ENCODE measurements at regions of chr4 and their contacts with region 1.

Region 1: DNA sequence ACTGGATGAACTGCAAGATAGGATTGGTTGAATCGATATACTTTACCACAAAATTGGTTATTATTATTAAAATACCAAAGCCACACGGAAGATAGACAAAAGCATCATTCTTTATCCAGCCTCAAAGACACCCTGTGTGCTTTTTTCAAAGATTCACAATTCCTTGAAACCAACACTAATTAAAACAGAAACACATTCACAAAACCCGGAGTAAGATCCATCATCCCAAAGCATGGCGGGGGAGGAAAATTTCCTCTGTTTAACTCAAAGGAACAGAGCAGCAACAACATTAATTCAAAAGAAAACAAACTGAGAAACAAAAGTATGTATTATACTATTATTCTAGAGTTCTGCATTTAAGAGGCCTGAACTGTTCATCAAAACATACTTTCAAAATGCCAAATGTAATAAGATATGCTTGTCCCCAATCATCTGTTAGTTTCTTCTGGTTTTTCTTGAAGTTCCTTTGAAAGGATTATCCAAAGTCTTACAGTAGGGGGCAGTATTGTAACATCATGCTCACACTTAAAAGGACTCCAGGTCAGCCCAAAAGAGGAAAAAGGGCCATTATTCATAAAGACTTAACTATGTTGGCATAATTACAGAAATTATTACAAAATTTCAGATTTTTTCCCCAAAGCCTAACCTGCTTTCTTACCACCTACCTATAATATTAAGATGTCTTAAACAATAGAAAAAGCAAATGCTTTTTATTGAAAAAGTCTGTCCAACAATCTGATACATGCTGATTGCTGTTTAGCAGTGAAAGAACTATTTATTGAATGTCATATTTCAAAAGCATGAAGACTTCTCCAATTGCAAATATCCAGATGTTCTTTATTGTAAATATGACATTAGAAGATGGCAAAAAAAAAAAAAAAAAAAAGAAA is 168.7 kb downstream of the SCFD2 start:
- DNase-seq: peak; percentile 65
- ATAC-seq: peak; percentile 59; the same call in 2 of the 3 replicates
- H3K4me3 ChIP-seq: no peak overlapping the region
- H3K27ac ChIP-seq: no peak overlapping the region
- H3K4me1 ChIP-seq: 0 out of 2 replicates have a peak, but pooled peaks cover 2% of the 10 kb centered on the region
- H3K27me3 ChIP-seq: no peaks in the 10 kb centered on the region; a peak in 1 of 5 replicates
- CTCF ChIP-seq: peak; percentile 74
- EP300 ChIP-seq: no peak
- POLR2A ChIP-seq: no peak
- RAD21 ChIP-seq: peak; percentile 64

Region 2: GRCh38 chr4:53377319-53378170 is 180.4 kb after region 1 on chr4 and contains the start of gene FIP1L1:
- CTCF ChIA-PET with region 1: no interaction called
- POLR2A ChIA-PET with region 1: no interaction called
- in situ Hi-C with region 1: no loop called
- intact Hi-C with region 1: no loop called
- DNase-seq: peak; percentile 83
- ATAC-seq: peak; percentile 95
- H3K4me3 ChIP-seq: peak within 1 kb of the TSS; percentile 94 to 99 (median 98)
- H3K27ac ChIP-seq: peak within 1 kb of the TSS; percentile 84
- H3K4me1 ChIP-seq: peaks cover 49% of the 10 kb centered on the region
- H3K27me3 ChIP-seq: no peaks in the 10 kb centered on the region
- CTCF ChIP-seq: 0 out of 2 replicates have a peak, but pooled peaks have one; percentile 6
- EP300 ChIP-seq: no peak
- POLR2A ChIP-seq: peak; percentile 84 to 85
- RAD21 ChIP-seq: no peak; the same call in 1 of the 2 replicates
- total RNA-seq, gene FIP1L1: 58.8 and 69.4 TPM in 2 replicates

Region 3: GRCh38 chr4:53459548-53459947 is 262.4 kb after region 1 on chr4:
- CTCF ChIA-PET with region 1: no interaction called
- POLR2A ChIA-PET with region 1: no interaction called
- in situ Hi-C with region 1: no loop called
- intact Hi-C with region 1: loop called (anchors 2 kb)
- DNase-seq: peak; percentile 80
- ATAC-seq: peak; percentile 96
- H3K4me3 ChIP-seq: no peak overlapping the region
- H3K27ac ChIP-seq: no peak overlapping the region
- H3K4me1 ChIP-seq: peaks cover 23% of the 10 kb centered on the region
- H3K27me3 ChIP-seq: no peaks in the 10 kb centered on the region
- CTCF ChIP-seq: no peak
- EP300 ChIP-seq: 0 out of 4 replicates have a peak, but pooled peaks of 1 of the 2 experiments have one; percentile 62
- POLR2A ChIP-seq: no peak
- RAD21 ChIP-seq: no peak

Region 4: DNA sequence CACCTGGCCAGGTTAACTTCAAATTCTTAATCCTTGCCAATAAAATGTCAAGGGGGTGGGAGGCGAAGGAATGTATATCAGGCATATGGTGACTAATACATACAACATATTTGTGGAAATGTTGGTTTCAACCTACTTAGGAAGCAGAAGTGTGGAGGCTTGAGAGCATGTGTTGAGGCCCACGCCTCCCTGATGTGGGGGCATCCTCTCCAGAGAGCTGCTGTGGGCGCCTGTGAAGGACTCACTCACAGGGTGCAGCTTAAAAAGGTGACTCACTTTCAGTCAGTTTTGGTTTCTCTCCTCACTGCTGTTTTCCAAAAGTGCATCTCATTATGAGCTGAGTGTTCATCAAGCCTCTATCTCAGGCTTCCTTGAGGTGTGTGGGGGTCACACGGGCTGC is 366.7 kb after region 1 on chr4:
- CTCF ChIA-PET with region 1: no interaction called
- POLR2A ChIA-PET with region 1: no interaction called
- in situ Hi-C with region 1: no loop called
- intact Hi-C with region 1: no loop called
- DNase-seq: no peak
- ATAC-seq: no peak; the same call in 2 of the 3 replicates
- H3K4me3 ChIP-seq: no peak overlapping the region
- H3K27ac ChIP-seq: no peak overlapping the region
- H3K4me1 ChIP-seq: no peaks in the 10 kb centered on the region
- H3K27me3 ChIP-seq: no peaks in the 10 kb centered on the region
- CTCF ChIP-seq: no peak
- EP300 ChIP-seq: no peak
- POLR2A ChIP-seq: no peak
- RAD21 ChIP-seq: no peak

Region 5: GRCh38 chr4:53702334-53703266 is 505.5 kb after region 1 on chr4:
- CTCF ChIA-PET with region 1: no interaction called
- POLR2A ChIA-PET with region 1: no interaction called
- in situ Hi-C with region 1: no loop called
- intact Hi-C with region 1: loop called (anchors 5 kb)
- DNase-seq: peak; percentile 63
- ATAC-seq: peak; percentile 90
- H3K4me3 ChIP-seq: peak overlapping the region; percentile 50 to 68 (median 56)
- H3K27ac ChIP-seq: no peak overlapping the region
- H3K4me1 ChIP-seq: peaks cover 27% of the 10 kb centered on the region
- H3K27me3 ChIP-seq: no peaks in the 10 kb centered on the region
- CTCF ChIP-seq: no peak
- EP300 ChIP-seq: no peak
- POLR2A ChIP-seq: no peak
- RAD21 ChIP-seq: no peak

Region 6: GRCh38 chr4:53908661-53909078 is 711.5 kb after region 1 on chr4:
- CTCF ChIA-PET with region 1: no interaction called
- POLR2A ChIA-PET with region 1: no interaction called
- in situ Hi-C with region 1: no loop called
- intact Hi-C with region 1: loop called (anchors 5 kb)
- DNase-seq: peak; percentile 83
- ATAC-seq: peak; percentile 90
- H3K4me3 ChIP-seq: peak overlapping the region in 1 of 3 experiments; percentile 15; a peak in 1 of 6 replicates
- H3K27ac ChIP-seq: no peak overlapping the region
- H3K4me1 ChIP-seq: peaks cover 41% of the 10 kb centered on the region
- H3K27me3 ChIP-seq: peaks cover 0 to 10% of the 10 kb centered on the region in 2 experiments; a peak in 3 of 5 replicates
- CTCF ChIP-seq: peak; percentile 87
- EP300 ChIP-seq: peak; percentile 19 to 59; a peak in 1 of 4 replicates
- POLR2A ChIP-seq: no peak
- RAD21 ChIP-seq: peak; percentile 84

Region 7: GRCh38 chr4:54233277-54233696 is 1036.2 kb after region 1 on chr4:
- CTCF ChIA-PET with region 1: interaction called, 11 read pairs
- POLR2A ChIA-PET with region 1: no interaction called
- in situ Hi-C with region 1: loop called (anchors 25 kb)
- intact Hi-C with region 1: loop called (anchors 2 kb)
- DNase-seq: peak; percentile 55
- ATAC-seq: peak; percentile 94
- H3K4me3 ChIP-seq: peak overlapping the region; percentile 45 to 75 (median 52); a peak in 5 of 6 replicates
- H3K27ac ChIP-seq: no peak overlapping the region
- H3K4me1 ChIP-seq: peaks cover 30% of the 10 kb centered on the region; the same call in 1 of the 2 replicates
- H3K27me3 ChIP-seq: peaks cover 14 to 45% of the 10 kb centered on the region in 2 experiments
- CTCF ChIP-seq: peak; percentile 93
- EP300 ChIP-seq: no peak
- POLR2A ChIP-seq: no peak
- RAD21 ChIP-seq: peak; percentile 97

Measured in HepG2 (cell line).